Naive thymus-derived CD8-positive, alpha-beta T cell (primary cell): ENCODE measurements at regions of chr1 and their contacts with region 1.

Region 1: DNA sequence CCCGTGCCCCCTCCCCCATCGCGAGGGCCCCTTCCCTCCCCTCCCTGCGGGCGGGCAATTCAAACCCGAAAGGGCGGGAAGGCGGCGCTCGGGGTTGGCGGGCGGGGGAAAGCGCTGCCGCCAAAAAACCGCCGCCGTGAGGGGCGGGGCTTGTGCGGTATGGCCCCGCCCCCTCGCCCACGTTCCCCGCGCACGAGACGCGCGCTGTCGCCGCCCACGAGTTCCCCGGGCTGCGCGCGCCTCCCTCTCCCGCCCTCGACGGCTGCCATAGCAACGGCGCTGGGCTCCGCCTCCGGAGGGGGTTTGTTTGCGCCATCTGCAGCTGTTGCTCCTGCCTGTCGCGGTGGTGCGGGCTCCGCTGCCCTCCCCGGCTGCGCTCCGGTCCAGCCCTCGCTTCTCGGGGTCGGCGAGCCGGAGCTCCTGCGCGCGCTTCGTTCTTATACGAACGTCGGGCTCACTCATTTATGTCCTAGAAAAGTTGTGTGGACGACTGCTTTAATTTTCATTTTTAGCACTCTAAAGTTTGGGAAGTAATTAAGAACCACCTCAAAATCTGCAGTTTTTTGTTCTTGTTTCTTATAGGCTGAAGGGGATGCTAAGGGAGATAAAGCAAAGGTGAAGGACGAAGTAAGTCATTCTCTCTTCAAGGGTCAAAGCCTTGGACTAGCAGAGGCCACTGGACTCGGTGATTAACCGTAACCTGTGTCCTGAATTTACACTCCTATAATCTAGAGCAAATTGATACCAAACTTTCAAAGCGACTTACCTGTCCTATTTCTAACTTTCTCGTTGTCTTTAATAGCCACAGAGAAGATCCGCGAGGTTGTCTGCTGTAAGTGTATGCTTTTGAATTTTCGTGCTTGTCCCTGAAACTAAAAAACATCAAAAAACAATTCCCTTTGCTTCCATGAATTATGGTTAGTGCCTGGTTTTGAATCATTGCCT is 933 bp downstream of the HMGN2 start:
- DNase-seq: peak; percentile 94 to 98 (median 96)
- ATAC-seq: peak; percentile 71 to 76
- H3K4me3 Mint-ChIP-seq: peak overlapping the region; percentile 86 to 95 (median 89)
- H3K27ac Mint-ChIP-seq: peak overlapping the region; percentile 74 to 92 (median 90)
- H3K4me1 Mint-ChIP-seq: peaks cover 16 to 60% (median 54%) of the 10 kb centered on the region in 4 donors
- H3K27me3 Mint-ChIP-seq: no peaks in the 10 kb centered on the region

Region 2: GRCh38 chr1:26431979-26432695 is 41.0 kb before region 1 on chr1 and contains the start of gene DHDDS:
- POLR2A ChIA-PET with region 1: interaction called, 43 read pairs
- DNase-seq: peak; percentile 96 to 99 (median 97)
- ATAC-seq: peak; percentile 95
- H3K4me3 Mint-ChIP-seq: peak within 1 kb of the TSS; percentile 91 to 100 (median 96)
- H3K27ac Mint-ChIP-seq: peak within 1 kb of the TSS; percentile 89 to 98 (median 97)
- H3K4me1 Mint-ChIP-seq: peaks cover 4 to 27% (median 24%) of the 10 kb centered on the region in 4 donors
- H3K27me3 Mint-ChIP-seq: peaks cover 0 to 3% (median 0%) of the 10 kb centered on the region in 5 donors
- polyA plus RNA-seq, gene DHDDS: 15.1 to 20.7 (median 18.6) TPM

Region 3: DNA sequence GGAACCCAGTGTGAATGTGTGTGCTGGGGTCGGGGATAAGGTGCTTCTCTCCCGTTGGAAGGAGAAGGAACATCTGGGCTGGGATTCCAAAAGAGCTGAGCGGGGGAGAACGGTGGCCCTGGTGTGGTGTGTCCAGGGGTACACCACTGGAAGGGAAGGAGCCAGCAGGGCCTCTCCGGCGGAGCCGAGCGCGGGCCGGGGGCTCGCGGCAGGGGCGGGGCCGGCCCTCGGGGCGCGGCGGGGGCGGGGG is 56.2 kb after region 1 on chr1:
- POLR2A ChIA-PET with region 1: no interaction called
- DNase-seq: peak in 1 of 10 donors; percentile 28
- ATAC-seq: no peak
- H3K4me3 Mint-ChIP-seq: peak overlapping the region; percentile 86 to 94 (median 93)
- H3K27ac Mint-ChIP-seq: peak overlapping the region in 9 of 10 donors; percentile 64 to 96 (median 87)
- H3K4me1 Mint-ChIP-seq: peaks cover 16 to 31% (median 27%) of the 10 kb centered on the region in 4 donors
- H3K27me3 Mint-ChIP-seq: peaks cover 0 to 3% (median 2%) of the 10 kb centered on the region in 5 donors

Region 4: DNA sequence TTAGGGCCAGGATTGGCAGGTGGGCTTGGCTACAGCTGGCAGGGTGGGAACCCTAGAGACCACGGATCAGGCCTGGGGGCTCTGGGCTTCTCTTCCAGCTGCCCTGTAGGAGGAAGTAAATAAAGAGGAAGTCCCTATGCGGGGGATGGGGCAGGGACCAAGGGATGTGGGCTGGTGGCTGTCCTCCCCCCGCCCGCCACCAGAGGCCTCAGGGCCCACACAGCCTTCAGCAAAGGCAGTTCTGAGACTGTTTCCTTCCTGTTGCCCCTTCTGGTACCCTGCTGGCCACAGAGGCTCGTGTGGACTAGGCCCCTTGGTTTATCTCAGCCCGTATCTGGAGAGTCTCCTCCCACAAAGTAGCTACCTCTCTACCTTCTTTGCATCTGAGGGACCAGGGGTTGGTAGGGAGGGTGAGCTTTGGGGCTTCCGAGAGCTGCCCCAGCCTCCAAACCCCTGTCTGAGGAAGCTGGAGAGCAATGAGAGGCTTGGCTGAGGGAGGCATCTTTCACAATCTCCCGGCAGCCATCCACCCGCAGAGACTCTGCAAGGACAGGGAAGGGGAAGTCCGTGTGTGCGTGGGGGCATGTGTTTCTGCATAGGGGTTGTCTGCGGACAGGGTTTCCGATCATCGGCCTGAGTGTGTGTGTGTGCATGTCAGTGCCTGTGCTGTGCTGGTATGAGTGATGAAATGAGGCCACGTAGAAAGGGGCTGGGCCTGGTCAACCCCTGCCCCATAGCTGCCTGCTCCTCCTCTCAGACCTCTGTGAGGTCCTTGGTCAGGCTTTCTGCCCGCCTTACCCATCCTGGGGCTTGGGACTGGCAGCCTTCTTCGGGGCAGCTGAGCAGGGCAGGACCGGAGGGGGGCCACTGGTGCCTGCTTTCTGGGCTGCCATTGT is 68.9 kb after region 1 on chr1:
- POLR2A ChIA-PET with region 1: interaction called, 11 read pairs
- DNase-seq: peak; percentile 30 to 85 (median 69)
- ATAC-seq: peak; percentile 71
- H3K4me3 Mint-ChIP-seq: peak overlapping the region; percentile 74 to 91 (median 83)
- H3K27ac Mint-ChIP-seq: peak overlapping the region; percentile 91 to 99 (median 96)
- H3K4me1 Mint-ChIP-seq: peaks cover 51 to 96% (median 89%) of the 10 kb centered on the region in 4 donors
- H3K27me3 Mint-ChIP-seq: no peaks in the 10 kb centered on the region